B cell (primary cell): ENCODE measurements at regions of chr3 and their contacts with region 1.

Region 1: GRCh38 chr3:48439820-48440589 is at the starts of genes CCDC51 and TMA7:
- DNase-seq: peak; percentile 98
- ATAC-seq: peak; percentile 94
- H3K4me3 ChIP-seq: peak within 1 kb of the TSS; percentile 83 to 94 (median 91)
- H3K4me3 Mint-ChIP-seq: peak within 1 kb of the TSS; percentile 97
- H3K27ac ChIP-seq: peak within 1 kb of the TSS; percentile 85
- H3K27ac Mint-ChIP-seq: peak within 1 kb of the TSS; percentile 92
- H3K4me1 ChIP-seq: peaks cover 19 to 27% of the 10 kb centered on the region in 2 donors
- H3K4me1 Mint-ChIP-seq: peaks cover 35% of the 10 kb centered on the region
- H3K27me3 ChIP-seq: no peaks in the 10 kb centered on the region
- H3K27me3 Mint-ChIP-seq: no peaks in the 10 kb centered on the region
- CTCF ChIP-seq: peak; percentile 37
- total RNA-seq, gene CCDC51: 5.0 and 6.2 TPM in 2 replicates
- total RNA-seq, gene TMA7: 185 and 194 TPM in 2 replicates

Region 2: DNA sequence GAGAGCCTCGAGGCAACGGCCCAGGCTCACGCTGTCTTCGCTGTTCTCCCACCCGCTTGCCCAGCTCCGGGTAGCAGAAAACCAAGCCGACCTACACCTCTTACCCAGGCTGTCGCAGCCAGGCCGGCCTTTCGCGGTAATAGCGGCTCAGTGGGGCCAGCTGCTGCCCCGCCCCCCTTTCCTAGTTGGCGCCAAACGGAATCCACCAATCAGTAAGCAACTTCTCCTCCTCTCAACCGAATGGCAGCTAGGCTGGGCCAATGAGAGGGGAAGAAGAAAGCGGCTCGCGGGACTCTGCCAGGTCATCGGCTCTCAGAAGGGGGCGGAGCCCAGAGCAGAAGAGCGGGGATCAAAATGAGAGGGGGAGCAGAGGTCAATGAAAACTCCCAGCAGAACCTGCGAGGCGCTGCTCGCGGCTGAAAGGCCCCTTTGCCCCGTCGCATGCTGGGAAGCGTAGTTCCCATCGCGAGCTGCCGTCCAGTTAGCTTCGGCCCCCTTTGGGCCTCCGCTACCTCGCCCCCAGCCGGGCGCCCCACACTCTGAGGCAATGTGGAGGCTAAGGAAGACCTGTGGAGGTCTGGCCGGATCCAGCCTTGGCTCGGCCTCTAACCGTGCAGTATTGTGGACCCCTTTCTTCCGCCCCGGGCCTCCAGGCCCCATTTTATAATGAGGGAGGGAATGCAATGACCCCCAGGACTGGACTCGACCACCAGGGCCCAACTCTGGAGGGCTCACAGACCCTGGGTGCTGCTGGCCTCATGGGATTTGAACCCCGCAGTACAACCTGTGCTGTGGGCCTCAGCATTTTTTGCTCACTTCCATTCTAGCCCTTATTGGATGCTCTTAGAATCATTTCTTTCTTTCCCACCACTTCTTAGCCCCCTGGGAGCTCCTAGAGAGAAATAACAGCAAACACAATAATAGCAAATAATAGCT is 251.5 kb before region 1 on chr3 and contains the start of gene CDC25A:
- CTCF ChIA-PET with region 1: interaction called, 14 read pairs
- POLR2A ChIA-PET with region 1: no interaction called
- intact Hi-C with region 1: loop called (anchors 5 kb)
- DNase-seq: peak; percentile 97
- ATAC-seq: peak; percentile 99
- H3K4me3 ChIP-seq: peak within 1 kb of the TSS; percentile 51 to 96 (median 76)
- H3K4me3 Mint-ChIP-seq: peak within 1 kb of the TSS; percentile 94
- H3K27ac ChIP-seq: peak within 1 kb of the TSS; percentile 38 to 71
- H3K27ac Mint-ChIP-seq: peak within 1 kb of the TSS; percentile 84
- H3K4me1 ChIP-seq: peaks cover 12 to 15% of the 10 kb centered on the region in 2 donors
- H3K4me1 Mint-ChIP-seq: peaks cover 15% of the 10 kb centered on the region
- H3K27me3 ChIP-seq: peaks cover 0 to 19% (median 8%) of the 10 kb centered on the region in 4 experiments
- H3K27me3 Mint-ChIP-seq: peaks cover 17% of the 10 kb centered on the region
- CTCF ChIP-seq: no peak
- total RNA-seq, gene CDC25A: 0.07 and 0.53 TPM in 2 replicates

Region 3: GRCh38 chr3:48240711-48241491 is 199.1 kb before region 1 on chr3 and contains the start of gene ZNF589:
- CTCF ChIA-PET with region 1: interaction called, 59 read pairs
- POLR2A ChIA-PET with region 1: interaction called, 5 read pairs
- intact Hi-C with region 1: no loop called
- DNase-seq: peak; percentile 96
- ATAC-seq: peak; percentile 95
- H3K4me3 ChIP-seq: peak within 1 kb of the TSS; percentile 69 to 95 (median 70)
- H3K4me3 Mint-ChIP-seq: peak within 1 kb of the TSS; percentile 97
- H3K27ac ChIP-seq: peak within 1 kb of the TSS; percentile 78 to 79
- H3K27ac Mint-ChIP-seq: peak within 1 kb of the TSS; percentile 98
- H3K4me1 ChIP-seq: peaks cover 3 to 24% of the 10 kb centered on the region in 2 donors
- H3K4me1 Mint-ChIP-seq: peaks cover 24% of the 10 kb centered on the region
- H3K27me3 ChIP-seq: no peaks in the 10 kb centered on the region
- H3K27me3 Mint-ChIP-seq: no peaks in the 10 kb centered on the region
- CTCF ChIP-seq: peak; percentile 29
- total RNA-seq, gene ZNF589: 29.8 and 34.7 TPM in 2 replicates

Region 4: DNA sequence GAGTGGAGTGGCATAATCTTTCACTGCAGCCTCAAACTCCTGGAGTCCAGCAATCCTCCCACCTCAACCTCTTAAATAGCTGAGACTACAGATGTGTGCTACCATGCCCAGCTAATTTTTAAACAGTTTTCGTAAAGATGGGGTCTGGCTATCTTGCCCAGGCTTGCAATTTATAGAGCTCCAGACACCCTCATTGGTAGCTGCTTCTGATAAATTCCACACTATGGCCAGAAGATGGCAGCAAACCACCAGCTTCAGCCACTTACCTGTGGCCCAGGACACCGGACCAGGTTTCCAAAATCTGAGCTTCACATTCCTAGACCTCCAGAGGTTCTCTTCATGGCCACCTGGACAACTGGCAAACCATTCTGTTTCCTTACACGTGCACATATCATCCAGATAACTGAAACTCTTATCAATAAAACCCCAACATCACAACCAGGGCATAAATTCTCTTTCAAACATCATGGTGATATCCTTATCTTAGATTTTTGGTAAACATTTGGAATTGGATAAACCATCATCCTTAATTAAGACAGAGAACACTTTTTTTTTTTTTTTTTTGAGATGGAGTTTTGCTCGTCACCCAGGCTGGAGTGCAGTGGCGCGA is 39.1 kb before region 1 on chr3:
- CTCF ChIA-PET with region 1: interaction called, 330 read pairs
- POLR2A ChIA-PET with region 1: interaction called, 5 read pairs
- intact Hi-C with region 1: loop called (anchors 1 kb)
- DNase-seq: peak; percentile 83
- ATAC-seq: peak; percentile 89
- H3K4me3 ChIP-seq: no peak overlapping the region
- H3K4me3 Mint-ChIP-seq: no peak overlapping the region
- H3K27ac ChIP-seq: no peak overlapping the region
- H3K27ac Mint-ChIP-seq: no peak overlapping the region
- H3K4me1 ChIP-seq: no peaks in the 10 kb centered on the region
- H3K4me1 Mint-ChIP-seq: no peaks in the 10 kb centered on the region
- H3K27me3 ChIP-seq: peaks cover 0 to under 1% (median 0%) of the 10 kb centered on the region in 4 experiments
- H3K27me3 Mint-ChIP-seq: peaks cover 8% of the 10 kb centered on the region
- CTCF ChIP-seq: peak; percentile 93

Region 5: DNA sequence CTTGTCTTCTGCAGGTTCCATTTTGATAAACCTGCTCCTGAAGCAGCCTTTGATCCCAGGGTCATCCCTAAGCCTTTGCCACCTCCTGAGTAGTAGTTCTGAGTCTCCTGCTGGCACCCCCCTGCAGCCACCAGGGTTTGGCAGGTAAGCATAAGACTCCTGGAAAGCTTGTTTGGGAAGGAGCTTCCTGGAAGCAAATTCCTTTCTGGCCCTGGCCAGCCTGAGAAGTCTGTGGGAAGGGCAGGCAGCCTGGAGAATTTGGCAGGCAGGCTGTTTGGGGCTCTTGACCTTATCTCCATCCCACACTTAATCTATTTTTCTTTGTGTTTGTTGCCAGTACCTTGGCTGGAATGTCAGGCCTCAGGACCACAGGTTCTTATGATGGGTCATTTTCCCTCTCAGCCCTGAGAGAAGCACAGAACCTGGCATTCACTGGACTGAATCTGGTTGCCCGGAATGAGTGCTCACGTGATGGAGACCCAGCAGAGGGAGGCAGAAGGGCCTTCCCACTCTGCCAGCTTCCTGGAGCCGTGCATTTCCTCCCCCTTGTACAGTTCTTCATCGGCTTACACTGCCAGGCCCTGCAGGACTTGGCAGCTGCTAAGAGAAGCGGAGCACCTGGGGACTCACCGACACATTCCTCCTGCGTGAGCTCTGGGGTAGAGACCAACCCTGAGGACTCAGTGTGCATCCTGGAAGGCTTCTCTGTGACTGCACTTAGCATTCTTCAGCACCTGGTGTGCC is 19.9 kb after region 1 on chr3:
- CTCF ChIA-PET with region 1: interaction called, 116 read pairs
- POLR2A ChIA-PET with region 1: interaction called, 3 read pairs
- intact Hi-C with region 1: no loop called
- DNase-seq: no peak
- ATAC-seq: no peak
- H3K4me3 ChIP-seq: no peak overlapping the region
- H3K4me3 Mint-ChIP-seq: no peak overlapping the region
- H3K27ac ChIP-seq: no peak overlapping the region
- H3K27ac Mint-ChIP-seq: no peak overlapping the region
- H3K4me1 ChIP-seq: no peaks in the 10 kb centered on the region
- H3K4me1 Mint-ChIP-seq: no peaks in the 10 kb centered on the region
- H3K27me3 ChIP-seq: no peaks in the 10 kb centered on the region
- H3K27me3 Mint-ChIP-seq: no peaks in the 10 kb centered on the region
- CTCF ChIP-seq: no peak

Region 6: DNA sequence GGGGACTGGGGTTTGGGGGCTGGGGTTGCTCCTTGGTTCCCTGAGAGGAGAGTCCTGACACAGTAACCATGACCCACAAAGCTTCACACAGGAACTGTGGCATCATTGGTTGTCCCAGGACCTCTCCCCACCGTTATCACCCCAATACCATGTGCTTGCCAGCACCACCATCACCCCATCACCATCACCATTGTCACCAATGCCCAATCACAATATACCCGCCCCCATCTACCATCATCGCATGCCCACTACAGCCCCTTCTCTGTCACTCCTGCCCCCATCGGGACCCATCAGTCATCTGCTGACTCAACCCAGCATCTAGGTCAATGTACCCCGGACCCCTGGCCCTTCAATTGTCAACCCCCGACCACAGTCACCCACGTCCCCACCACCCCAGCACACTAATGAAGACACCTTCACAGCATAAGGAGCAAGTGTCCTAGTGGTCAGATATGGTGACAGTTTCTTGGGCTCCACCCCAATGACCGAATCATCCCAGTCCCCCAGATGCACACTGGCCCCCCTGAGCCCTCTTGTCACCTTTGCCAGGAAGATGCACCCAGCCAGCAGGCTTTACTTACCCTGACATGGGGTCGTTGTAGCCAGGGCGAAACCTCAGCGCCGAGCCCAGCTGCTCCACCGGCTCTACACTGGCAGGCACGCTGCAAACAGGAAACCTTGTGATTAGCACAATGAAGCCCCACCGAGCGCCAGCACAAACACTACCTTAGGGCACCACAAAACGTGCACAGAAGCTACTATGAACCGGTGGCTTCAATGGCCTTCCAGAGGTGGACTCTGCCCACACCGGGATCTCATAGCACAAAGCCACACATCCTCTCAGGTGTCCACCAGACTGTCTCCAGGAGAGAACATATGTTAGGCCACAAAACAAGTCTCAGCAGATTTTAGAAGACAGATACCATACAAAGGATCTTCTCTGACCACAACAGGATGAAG is 38.9 kb after region 1 on chr3:
- CTCF ChIA-PET with region 1: interaction called, 31 read pairs
- POLR2A ChIA-PET with region 1: interaction called, 22 read pairs
- intact Hi-C with region 1: no loop called
- DNase-seq: peak; percentile 72
- ATAC-seq: peak; percentile 78
- H3K4me3 ChIP-seq: peak overlapping the region in 4 of 5 experiments; percentile 37 to 52 (median 44)
- H3K4me3 Mint-ChIP-seq: peak overlapping the region; percentile 86
- H3K27ac ChIP-seq: peak overlapping the region; percentile 85 to 89
- H3K27ac Mint-ChIP-seq: peak overlapping the region; percentile 99
- H3K4me1 ChIP-seq: peaks cover 38 to 45% of the 10 kb centered on the region in 2 donors
- H3K4me1 Mint-ChIP-seq: peaks cover 45% of the 10 kb centered on the region
- H3K27me3 ChIP-seq: no peaks in the 10 kb centered on the region
- H3K27me3 Mint-ChIP-seq: no peaks in the 10 kb centered on the region
- CTCF ChIP-seq: no peak

Region 7: GRCh38 chr3:48556793-48557626 is 117.0 kb after region 1 on chr3 and contains the start of gene PFKFB4:
- CTCF ChIA-PET with region 1: interaction called, 34 read pairs
- POLR2A ChIA-PET with region 1: interaction called, 3 read pairs
- intact Hi-C with region 1: loop called (anchors 1 kb)
- DNase-seq: peak; percentile 100
- ATAC-seq: peak; percentile 89
- H3K4me3 ChIP-seq: peak within 1 kb of the TSS; percentile 53 to 73 (median 63)
- H3K4me3 Mint-ChIP-seq: peak within 1 kb of the TSS; percentile 87
- H3K27ac ChIP-seq: peak within 1 kb of the TSS; percentile 41 to 65
- H3K27ac Mint-ChIP-seq: peak within 1 kb of the TSS; percentile 80
- H3K4me1 ChIP-seq: peaks cover 16 to 40% of the 10 kb centered on the region in 2 donors
- H3K4me1 Mint-ChIP-seq: peaks cover 33% of the 10 kb centered on the region
- H3K27me3 ChIP-seq: no peaks in the 10 kb centered on the region
- H3K27me3 Mint-ChIP-seq: no peaks in the 10 kb centered on the region
- CTCF ChIP-seq: no peak
- total RNA-seq, gene PFKFB4: 3.2 and 3.3 TPM in 2 replicates

Region 8: DNA sequence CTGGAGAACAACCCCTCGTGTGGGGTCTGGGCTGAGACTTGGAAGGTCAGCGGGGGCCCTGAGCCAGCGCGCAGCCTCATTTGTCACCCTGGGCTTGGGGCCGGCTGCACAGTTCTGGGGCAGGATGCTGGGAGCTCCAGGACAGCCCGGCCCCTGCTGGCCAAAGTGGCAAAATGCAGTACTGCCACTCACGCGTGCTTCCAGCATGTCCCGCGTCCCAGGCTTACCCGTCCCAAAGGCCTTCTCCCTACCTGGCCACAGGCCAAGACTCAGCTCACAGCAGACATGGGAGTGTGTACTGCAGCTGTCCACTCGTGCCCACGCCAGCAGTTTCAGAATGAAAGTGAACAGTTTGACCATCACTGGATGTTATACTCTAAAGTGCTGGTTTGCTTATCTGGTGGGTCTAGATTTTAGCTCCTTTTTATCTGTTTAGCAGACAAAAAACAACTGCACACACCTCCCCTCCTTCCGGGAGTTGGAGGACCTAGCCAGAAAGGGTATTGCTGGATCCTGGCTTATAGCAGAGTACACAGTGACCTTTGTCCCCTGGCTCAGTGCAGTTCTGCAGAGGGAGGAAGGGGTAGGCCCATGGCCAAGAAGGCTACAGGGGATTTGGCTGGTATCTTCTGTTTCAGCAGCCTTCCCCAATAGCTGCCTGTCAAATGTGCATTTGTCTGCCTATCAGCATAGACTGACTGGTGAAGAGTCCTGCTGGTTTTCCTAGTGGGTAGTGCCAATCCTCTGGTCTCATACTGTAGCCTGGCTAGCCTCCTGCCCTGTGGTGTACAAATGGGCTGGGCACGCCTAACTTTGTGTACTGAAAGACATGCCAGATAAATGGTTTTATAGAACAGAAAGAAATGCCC is 300.2 kb after region 1 on chr3:
- CTCF ChIA-PET with region 1: no interaction called
- POLR2A ChIA-PET with region 1: no interaction called
- intact Hi-C with region 1: no loop called
- DNase-seq: peak; percentile 67
- ATAC-seq: peak; percentile 90
- H3K4me3 ChIP-seq: no peak overlapping the region
- H3K4me3 Mint-ChIP-seq: no peak overlapping the region
- H3K27ac ChIP-seq: no peak overlapping the region
- H3K27ac Mint-ChIP-seq: no peak overlapping the region
- H3K4me1 ChIP-seq: peaks cover 0 to 8% of the 10 kb centered on the region in 2 donors
- H3K4me1 Mint-ChIP-seq: peaks cover 13% of the 10 kb centered on the region
- H3K27me3 ChIP-seq: no peaks in the 10 kb centered on the region
- H3K27me3 Mint-ChIP-seq: no peaks in the 10 kb centered on the region
- CTCF ChIP-seq: peak; percentile 77